Common myeloid progenitor, CD34-positive (primary cell): ENCODE measurements at regions of chr20 and their contacts with region 1.

Region 1: DNA sequence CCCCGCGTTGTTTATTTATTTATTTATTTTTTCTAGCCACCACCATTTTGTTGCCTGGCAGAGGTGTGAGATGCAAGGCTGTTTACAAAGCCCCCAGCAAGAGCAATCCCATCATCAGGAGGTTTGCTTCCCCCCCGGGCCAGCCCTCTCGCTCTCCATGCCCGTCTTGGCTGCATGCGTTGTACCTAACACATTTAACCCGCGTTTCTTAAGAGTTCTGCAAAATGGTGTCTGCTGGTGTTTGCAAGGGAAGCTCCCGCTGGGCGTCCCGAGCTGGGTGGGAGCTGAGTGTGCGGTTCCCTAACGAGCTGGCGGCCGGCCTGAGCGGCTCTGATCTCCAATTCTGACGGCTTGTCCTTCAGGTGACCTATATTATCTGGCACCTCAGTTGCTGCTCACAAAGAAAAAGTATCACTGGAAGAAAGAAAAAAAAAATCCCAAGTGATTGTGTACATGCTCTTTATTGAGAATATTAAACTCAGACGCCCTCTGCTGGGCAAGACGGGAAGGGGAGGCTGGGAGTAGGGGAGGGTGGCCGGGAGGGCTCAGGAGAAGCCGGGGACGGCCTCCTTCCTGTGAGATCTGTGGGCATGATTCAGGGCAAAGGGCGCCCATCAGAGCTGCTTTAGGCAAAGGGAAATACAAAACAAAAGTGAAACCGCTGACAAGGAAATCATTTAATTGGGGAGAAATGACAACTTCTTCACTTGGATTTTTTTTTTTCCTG is 154.8 kb downstream of the BCAS1 start:
- DNase-seq: peak; percentile 95 to 98 (median 98)
- H3K4me3 ChIP-seq: peak overlapping the region; percentile 73 to 98 (median 84)
- H3K27ac ChIP-seq: peak overlapping the region; percentile 72 to 91
- H3K4me1 ChIP-seq: peaks cover 16 to 40% (median 30%) of the 10 kb centered on the region in 4 experiments
- H3K27me3 ChIP-seq: no peaks in the 10 kb centered on the region

Region 2: GRCh38 chr20:53578492-53579222 is 337.0 kb before region 1 on chr20:
- CTCF ChIA-PET with region 1: interaction called, 14 read pairs
- POLR2A ChIA-PET with region 1: interaction called, 3 read pairs
- DNase-seq: peak; percentile 92 to 96 (median 93)
- H3K4me3 ChIP-seq: peak overlapping the region in 5 of 7 experiments; percentile 4 to 65 (median 41)
- H3K27ac ChIP-seq: peak overlapping the region; percentile 52 to 72
- H3K4me1 ChIP-seq: peaks cover 28 to 47% (median 41%) of the 10 kb centered on the region in 4 experiments
- H3K27me3 ChIP-seq: no peaks in the 10 kb centered on the region

Region 3: GRCh38 chr20:53869466-53870258 is 45.9 kb before region 1 on chr20:
- CTCF ChIA-PET with region 1: interaction called, 17 read pairs
- POLR2A ChIA-PET with region 1: interaction called, 4 read pairs
- DNase-seq: peak; percentile 84 to 86 (median 85)
- H3K4me3 ChIP-seq: peak overlapping the region in 4 of 7 experiments; percentile 28 to 46 (median 42)
- H3K27ac ChIP-seq: peak overlapping the region in 1 of 2 experiments; percentile 57
- H3K4me1 ChIP-seq: peaks cover 27 to 65% (median 42%) of the 10 kb centered on the region in 4 experiments
- H3K27me3 ChIP-seq: no peaks in the 10 kb centered on the region

Region 4: GRCh38 chr20:53903652-53903987 is 12.0 kb before region 1 on chr20:
- CTCF ChIA-PET with region 1: interaction called, 15 read pairs
- POLR2A ChIA-PET with region 1: no interaction called
- DNase-seq: peak in 2 of 3 donors; percentile 77 to 80
- H3K4me3 ChIP-seq: no peak overlapping the region
- H3K27ac ChIP-seq: no peak overlapping the region
- H3K4me1 ChIP-seq: peaks cover 11 to 67% (median 27%) of the 10 kb centered on the region in 4 experiments
- H3K27me3 ChIP-seq: no peaks in the 10 kb centered on the region

Region 5: GRCh38 chr20:53939572-53940359 is 24.2 kb after region 1 on chr20:
- CTCF ChIA-PET with region 1: interaction called, 166 read pairs
- POLR2A ChIA-PET with region 1: interaction called, 4 read pairs
- DNase-seq: peak; percentile 94 to 95 (median 95)
- H3K4me3 ChIP-seq: peak overlapping the region in 2 of 7 experiments; percentile 7 to 11
- H3K27ac ChIP-seq: peak overlapping the region; percentile 9 to 31
- H3K4me1 ChIP-seq: peaks cover 23 to 89% (median 62%) of the 10 kb centered on the region in 4 experiments
- H3K27me3 ChIP-seq: no peaks in the 10 kb centered on the region

Region 6: GRCh38 chr20:53957451-53958172 is 42.0 kb after region 1 on chr20:
- CTCF ChIA-PET with region 1: no interaction called
- POLR2A ChIA-PET with region 1: no interaction called
- DNase-seq: peak in 2 of 3 donors; percentile 19 to 34
- H3K4me3 ChIP-seq: no peak overlapping the region
- H3K27ac ChIP-seq: no peak overlapping the region
- H3K4me1 ChIP-seq: no peaks in the 10 kb centered on the region
- H3K27me3 ChIP-seq: no peaks in the 10 kb centered on the region

Region 7: DNA sequence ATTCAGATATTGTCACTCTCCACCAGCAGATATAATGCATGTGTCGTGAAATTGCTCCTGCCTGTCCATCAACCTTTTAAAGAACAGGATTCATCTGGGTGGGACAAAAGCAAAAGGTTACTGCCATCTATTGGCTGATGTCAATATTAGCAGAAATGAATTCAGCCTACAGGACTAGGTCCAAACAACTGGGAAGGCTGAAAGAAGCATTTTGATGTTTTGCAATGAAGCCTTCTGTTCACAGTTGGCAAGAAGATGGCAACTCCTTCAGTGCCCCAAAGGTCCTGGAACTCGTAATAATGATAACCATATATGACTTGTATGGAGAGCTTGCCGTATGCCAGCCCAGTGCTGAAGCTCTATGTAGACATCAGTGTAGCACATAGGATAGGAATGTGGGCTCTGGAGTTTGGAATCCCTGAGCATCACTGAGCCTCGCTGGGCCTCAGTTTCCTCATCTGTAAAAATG is 147.2 kb after region 1 on chr20:
- CTCF ChIA-PET with region 1: interaction called, 11 read pairs
- POLR2A ChIA-PET with region 1: no interaction called
- DNase-seq: peak; percentile 43 to 57 (median 51)
- H3K4me3 ChIP-seq: no peak overlapping the region
- H3K27ac ChIP-seq: no peak overlapping the region
- H3K4me1 ChIP-seq: peaks cover 0 to 42% (median 11%) of the 10 kb centered on the region in 4 experiments
- H3K27me3 ChIP-seq: no peaks in the 10 kb centered on the region

Region 8: GRCh38 chr20:54103762-54104600 is 188.4 kb after region 1 on chr20:
- CTCF ChIA-PET with region 1: no interaction called
- POLR2A ChIA-PET with region 1: no interaction called
- DNase-seq: no peak
- H3K4me3 ChIP-seq: no peak overlapping the region
- H3K27ac ChIP-seq: no peak overlapping the region
- H3K4me1 ChIP-seq: no peaks in the 10 kb centered on the region
- H3K27me3 ChIP-seq: no peaks in the 10 kb centered on the region

Region 9: GRCh38 chr20:54123587-54124180 is 208.1 kb after region 1 on chr20:
- CTCF ChIA-PET with region 1: no interaction called
- POLR2A ChIA-PET with region 1: no interaction called
- DNase-seq: no peak
- H3K4me3 ChIP-seq: no peak overlapping the region
- H3K27ac ChIP-seq: no peak overlapping the region
- H3K4me1 ChIP-seq: no peaks in the 10 kb centered on the region
- H3K27me3 ChIP-seq: no peaks in the 10 kb centered on the region